GM10248 (cell line): ENCODE measurements at regions of chr4 and their contacts with region 1.

Region 1: DNA sequence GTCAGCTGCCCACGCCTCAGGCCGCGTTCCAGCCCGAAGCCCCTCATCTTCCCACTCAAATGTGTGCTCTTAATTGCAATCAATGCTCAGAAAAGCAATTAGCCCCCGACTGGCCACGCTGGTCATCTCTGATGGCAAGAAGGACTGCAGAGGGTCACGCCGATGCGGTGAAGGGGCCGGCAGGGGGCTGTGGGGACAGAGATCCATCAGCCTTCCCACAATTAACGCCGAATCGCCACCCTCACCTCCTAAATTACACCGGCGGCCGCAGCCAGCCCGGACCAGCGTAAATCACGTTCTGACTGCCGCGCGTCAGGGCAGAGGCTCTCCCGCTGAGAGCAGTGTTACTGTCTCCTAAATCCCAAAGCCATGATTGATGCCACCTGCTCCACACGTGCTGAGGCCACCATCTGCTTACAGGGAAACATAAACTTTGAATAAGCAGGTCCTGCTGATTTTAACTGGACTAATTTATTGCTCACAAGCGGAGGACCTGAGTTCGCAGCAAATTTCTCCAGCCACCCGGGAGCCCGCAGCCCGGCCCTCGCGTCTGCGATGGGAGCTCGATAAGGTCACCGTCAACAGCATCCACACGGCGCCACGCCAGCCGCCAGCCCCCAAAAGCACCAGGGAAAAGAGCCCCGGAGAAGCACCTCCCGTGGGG is 127.3 kb upstream of the NKX1-1 start:
- DNase-seq: no peak
- CTCF ChIP-seq: no peak

Region 2: DNA sequence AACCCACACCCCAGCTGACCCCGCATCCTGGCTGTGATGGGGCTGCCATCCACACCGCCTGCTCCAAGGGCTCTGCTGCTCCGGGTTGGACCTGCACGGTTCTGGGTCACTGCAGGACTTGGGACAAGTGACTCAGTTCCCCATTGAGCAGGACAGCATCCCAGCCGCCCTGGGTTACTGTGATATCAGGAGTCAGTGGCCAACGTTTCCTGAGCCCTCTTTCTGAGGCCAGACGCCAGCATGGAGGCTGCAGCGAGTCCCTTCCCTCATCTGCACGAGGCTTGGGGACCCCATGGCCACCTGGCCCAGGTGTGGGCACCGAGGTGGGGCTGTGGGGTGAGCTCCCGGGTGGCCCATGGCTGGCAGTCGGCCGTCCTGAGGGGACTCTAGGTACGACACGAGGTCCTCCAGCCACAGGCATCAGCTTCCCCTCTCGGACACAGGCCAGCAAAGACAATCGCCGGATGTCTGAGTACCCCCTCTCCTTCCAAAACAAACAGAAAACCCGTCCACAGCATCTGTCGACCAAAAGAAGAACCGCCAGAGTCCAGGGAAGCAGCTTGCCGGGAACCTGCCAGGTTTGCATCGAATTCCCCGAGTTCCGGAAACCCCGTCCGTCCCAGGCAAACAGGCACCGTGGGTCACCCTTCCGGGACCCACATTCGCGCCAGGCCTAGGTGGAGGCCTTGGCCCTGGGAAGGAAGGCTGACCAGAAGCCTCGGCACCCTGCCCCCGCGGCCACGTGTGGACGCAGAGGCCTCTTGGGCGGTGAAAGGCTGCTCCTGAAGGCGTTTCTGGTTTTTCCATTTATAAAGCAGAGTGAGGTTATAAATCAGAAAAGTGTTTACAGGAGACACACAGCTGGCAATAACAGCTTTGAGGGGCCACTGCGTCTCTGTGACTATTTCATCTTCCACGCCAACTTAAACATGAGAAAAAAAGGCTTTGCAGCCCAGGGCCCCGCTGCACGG is 14.6 kb after region 1 on chr4:
- CTCF ChIA-PET with region 1: interaction called, 12 read pairs
- POLR2A ChIA-PET with region 1: no interaction called
- DNase-seq: no peak
- CTCF ChIP-seq: no peak